A673 (cell line): ENCODE measurements at regions of chr4 and their contacts with region 1.

Region 1: GRCh38 chr4:110049951-110050925 is 137.6 kb downstream of the EGF start:
- DNase-seq: peak; percentile 59
- H3K4me3 ChIP-seq: no peak overlapping the region
- H3K27ac ChIP-seq: no peak overlapping the region
- H3K4me1 ChIP-seq: peaks cover 12% of the 10 kb centered on the region
- H3K27me3 ChIP-seq: no peaks in the 10 kb centered on the region
- CTCF ChIP-seq: peak; percentile 91

Region 2: DNA sequence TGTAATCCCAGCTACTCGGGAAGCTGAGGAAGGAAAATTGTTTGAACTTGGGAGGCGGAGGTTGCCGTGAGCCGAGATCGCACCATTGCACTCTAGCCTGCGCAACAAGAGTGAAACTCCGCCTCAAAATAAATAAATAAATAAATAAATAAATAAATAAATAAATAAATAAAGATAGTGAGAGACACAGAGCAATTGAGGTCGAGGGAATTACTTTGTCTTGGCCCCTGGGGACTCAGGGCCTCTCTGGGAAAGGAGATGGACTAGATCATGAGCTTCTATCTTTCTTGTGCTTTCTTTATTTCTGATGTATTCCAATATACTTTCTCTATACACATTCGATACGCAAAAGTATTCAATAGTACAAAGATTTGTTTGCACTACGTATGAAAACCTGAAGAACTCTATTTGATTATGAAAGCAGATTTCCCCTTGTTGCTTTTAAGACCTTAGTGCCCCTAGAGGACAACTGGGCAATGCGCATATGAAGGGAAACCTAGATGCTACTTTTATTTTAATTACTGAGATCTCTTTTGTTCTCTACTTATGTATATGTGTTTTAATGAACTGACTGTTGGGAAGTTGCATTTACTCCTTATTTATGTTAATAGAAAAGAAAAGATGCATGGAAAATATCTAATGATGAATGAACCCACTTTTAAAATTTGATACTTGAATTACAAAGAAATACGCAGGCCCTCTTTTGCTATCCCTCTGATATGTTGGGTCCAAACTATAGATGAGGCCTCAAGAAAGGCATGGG is 160.9 kb after region 1 on chr4:
- CTCF ChIA-PET with region 1: no interaction called
- POLR2A ChIA-PET with region 1: no interaction called
- intact Hi-C with region 1: loop called (anchors 1 kb)
- DNase-seq: peak; percentile 56
- H3K4me3 ChIP-seq: no peak overlapping the region
- H3K27ac ChIP-seq: no peak overlapping the region
- H3K4me1 ChIP-seq: no peaks in the 10 kb centered on the region
- H3K27me3 ChIP-seq: no peaks in the 10 kb centered on the region
- CTCF ChIP-seq: peak; percentile 75